Posterior cingulate gyrus (tissue), 11 donors: ENCODE measurements at regions of chr1 and their contacts with region 1.

Region 1: GRCh38 chr1:27044613-27045151 is 32.0 kb upstream of the TENT5B start:
- DNase-seq: peak; percentile 74 to 97 (median 94)

Region 2: DNA sequence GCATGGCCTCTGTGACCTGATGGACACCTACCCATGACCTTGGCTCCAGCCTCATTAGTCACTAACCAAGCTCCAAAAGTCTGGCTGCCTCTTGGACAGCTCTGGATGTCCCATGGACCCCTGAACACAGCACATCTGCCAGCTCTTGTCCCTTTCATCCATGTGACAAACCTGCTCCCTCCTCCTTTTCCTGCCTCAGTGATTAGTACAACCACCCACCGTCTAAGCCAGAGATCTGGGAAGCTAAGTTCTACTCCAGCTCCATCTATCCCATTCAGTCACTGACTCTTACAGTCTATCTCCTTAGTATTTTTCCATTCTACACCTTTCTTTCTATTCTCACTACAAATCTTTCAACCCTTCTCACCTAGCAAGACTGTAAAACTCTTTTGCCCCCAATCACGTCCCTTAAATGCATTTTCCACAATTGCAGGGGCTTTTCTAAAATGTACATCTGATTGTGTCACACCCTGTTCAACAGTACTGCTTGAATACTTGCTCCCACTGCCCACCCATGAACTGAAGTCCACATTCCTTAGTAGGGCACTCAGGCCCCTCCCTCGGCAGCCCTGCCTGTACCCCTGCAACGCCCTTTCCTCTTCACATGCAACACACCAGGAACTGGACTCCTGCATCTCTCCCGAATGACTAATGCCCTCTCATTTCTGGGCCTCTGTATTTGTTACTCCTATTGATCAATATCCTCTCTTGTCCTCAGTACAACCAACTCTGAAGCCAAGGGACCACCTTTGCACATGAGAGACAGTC is 161.8 kb before region 1 on chr1:
- intact Hi-C with region 1: no loop called
- DNase-seq: no peak

Region 3: DNA sequence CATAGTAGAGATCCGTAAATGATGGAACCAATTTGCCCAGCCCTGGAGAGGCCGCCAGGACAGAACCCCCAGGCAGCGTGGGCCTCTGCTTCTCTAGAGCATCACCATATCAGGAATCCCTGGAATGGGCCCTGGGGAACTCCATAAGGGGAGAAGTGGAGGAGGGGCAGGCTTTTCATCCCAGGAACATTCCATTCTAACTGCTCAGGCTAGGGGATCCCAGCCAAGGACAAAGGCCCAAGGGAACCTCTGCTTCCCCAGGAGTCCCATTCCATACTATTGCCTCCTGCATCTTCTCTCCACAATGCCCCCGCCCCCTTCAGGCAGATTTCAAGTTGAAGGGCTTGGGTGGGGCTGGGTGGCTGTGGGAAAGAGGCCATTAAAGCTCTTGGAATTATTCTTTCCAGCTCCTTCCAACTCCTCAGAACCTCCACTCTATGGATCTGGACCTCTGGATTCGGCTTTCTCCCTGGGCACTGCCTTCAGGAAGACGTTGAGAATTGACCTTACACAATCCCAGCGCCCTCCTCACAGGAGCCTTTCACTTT is 45.2 kb before region 1 on chr1:
- intact Hi-C with region 1: loop called (anchors 5 kb)
- DNase-seq: no peak

Region 4: DNA sequence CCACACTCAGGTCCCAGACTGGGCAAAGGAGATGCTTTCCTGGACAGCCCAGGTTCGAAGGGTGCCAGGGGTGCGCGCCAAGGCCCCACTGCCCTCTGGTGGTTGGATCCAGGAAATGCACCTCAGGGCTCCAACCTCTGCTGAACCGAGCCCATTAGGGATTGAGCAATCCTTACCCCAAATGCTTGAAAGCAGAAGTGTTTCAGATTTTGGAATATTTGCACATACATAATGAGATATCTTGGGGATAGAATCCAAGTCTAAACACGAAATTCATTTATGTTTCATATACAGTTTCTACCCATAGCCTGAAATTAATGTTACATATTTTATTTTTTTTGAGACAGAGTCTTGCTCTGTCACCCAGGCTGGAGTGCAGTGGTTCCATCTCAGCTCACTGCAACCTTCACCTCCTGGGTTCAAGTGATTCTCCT is 52.8 kb after region 1 on chr1:
- intact Hi-C with region 1: loop called (anchors 1 kb)
- DNase-seq: peak in 9 of 10 donors; percentile 55 to 96 (median 76)

Region 5: GRCh38 chr1:27284425-27285273 is 240.0 kb after region 1 on chr1:
- intact Hi-C with region 1: loop called (anchors 1 kb)
- DNase-seq: peak; percentile 53 to 95 (median 86)